SK-N-SH (cell line): ENCODE measurements at regions of chr3 and their contacts with region 1.

Region 1: DNA sequence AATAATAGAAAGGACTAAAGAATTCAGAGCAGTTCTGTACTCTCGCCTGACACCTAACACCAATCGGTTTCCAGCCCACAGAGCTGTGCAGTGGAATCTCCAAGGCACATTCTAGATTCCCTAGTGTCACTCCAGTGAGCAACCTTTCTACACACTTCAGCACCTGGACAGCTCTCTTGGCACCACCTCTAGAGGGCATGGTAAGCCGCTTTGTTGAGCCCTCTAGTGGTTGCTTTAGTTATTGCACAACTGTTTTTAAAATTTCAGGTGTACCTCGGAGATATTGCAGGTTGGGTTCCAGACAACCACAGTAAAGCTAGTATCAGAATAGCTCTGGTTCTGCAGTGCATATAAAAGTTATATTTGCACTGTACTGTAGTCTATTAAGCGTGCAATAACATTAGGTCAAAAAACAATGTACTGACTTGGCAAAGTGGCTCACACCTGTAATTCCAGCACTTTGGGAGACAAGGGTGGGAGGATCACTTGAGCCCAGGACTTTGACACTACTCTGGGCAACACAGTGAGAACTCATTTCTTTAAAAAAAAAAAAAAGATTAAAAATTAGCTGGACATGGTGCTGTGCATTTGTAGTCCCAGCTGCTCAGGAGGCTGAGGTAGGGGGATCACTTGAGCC is 26.5 kb upstream of the ERC2 start:
- DNase-seq: peak; percentile 66
- H3K4me3 ChIP-seq: no peak overlapping the region; a peak in 1 of 4 replicates
- H3K27ac ChIP-seq: no peak overlapping the region
- H3K4me1 ChIP-seq: no peaks in the 10 kb centered on the region
- H3K27me3 ChIP-seq: no peaks in the 10 kb centered on the region
- CTCF ChIP-seq: peak; percentile 97
- EP300 ChIP-seq: no peak
- RAD21 ChIP-seq: peak; percentile 72

Region 2: GRCh38 chr3:56467108-56467507 is 27.7 kb before region 1 on chr3:
- CTCF ChIA-PET with region 1: interaction called, 15 read pairs
- POLR2A ChIA-PET with region 1: no interaction called
- DNase-seq: peak; percentile 89
- H3K4me3 ChIP-seq: peak overlapping the region; percentile 64 to 65
- H3K27ac ChIP-seq: no peak overlapping the region
- H3K4me1 ChIP-seq: no peaks in the 10 kb centered on the region; a peak in 1 of 4 replicates
- H3K27me3 ChIP-seq: no peaks in the 10 kb centered on the region
- CTCF ChIP-seq: no peak
- EP300 ChIP-seq: no peak
- RAD21 ChIP-seq: no peak

Region 3: DNA sequence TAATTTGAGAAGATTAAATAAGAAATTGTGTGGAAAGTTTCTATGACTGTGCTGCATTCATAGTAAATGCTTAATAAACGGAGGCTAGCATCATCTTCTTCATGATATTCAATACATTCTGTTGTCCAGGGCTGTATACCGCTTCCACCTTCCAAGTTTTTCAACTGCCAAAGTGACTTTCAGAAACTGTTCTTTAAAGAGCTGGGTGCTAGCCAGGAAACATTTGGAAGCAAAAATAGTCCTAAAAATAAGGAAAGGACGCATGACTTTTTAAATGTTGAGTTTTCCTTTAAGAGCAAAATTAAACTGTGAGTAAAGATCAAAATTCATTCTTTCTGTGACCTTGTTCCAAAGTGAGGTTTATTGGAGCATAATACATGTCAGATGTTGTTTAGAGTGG is 17.2 kb before region 1 on chr3:
- CTCF ChIA-PET with region 1: interaction called, 42 read pairs
- POLR2A ChIA-PET with region 1: no interaction called
- DNase-seq: no peak
- H3K4me3 ChIP-seq: no peak overlapping the region
- H3K27ac ChIP-seq: no peak overlapping the region
- H3K4me1 ChIP-seq: no peaks in the 10 kb centered on the region
- H3K27me3 ChIP-seq: no peaks in the 10 kb centered on the region; the same call in 1 of the 2 replicates
- CTCF ChIP-seq: no peak
- EP300 ChIP-seq: no peak
- RAD21 ChIP-seq: no peak

Region 4: GRCh38 chr3:56484122-56484521 is 10.7 kb before region 1 on chr3:
- CTCF ChIA-PET with region 1: interaction called, 42 read pairs
- POLR2A ChIA-PET with region 1: no interaction called
- DNase-seq: no peak
- H3K4me3 ChIP-seq: no peak overlapping the region
- H3K27ac ChIP-seq: no peak overlapping the region
- H3K4me1 ChIP-seq: no peaks in the 10 kb centered on the region
- H3K27me3 ChIP-seq: no peaks in the 10 kb centered on the region; the same call in 1 of the 2 replicates
- CTCF ChIP-seq: no peak
- EP300 ChIP-seq: no peak
- RAD21 ChIP-seq: no peak

Region 5: DNA sequence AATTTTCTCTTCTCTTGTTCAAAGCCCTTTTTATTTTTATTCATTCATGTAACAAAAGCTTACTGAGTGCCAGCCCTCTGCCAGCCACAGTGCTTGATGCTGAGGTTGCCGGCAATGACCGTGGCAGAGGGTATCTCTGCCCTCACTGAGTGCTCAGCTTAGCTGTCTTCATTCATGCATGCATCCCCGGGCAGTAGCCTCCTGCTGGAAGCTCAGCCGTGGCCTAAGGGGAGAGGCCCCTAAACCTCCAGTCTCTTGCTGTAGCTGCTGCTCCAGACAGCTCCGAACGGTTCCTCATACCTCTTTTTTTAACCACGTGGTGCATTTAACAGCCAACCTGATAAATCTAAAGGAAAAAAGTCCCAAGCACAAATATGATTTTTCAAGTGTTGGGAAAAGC is 27.6 kb after region 1 on chr3:
- CTCF ChIA-PET with region 1: interaction called, 15 read pairs
- POLR2A ChIA-PET with region 1: no interaction called
- DNase-seq: no peak
- H3K4me3 ChIP-seq: no peak overlapping the region
- H3K27ac ChIP-seq: no peak overlapping the region
- H3K4me1 ChIP-seq: no peaks in the 10 kb centered on the region
- H3K27me3 ChIP-seq: no peaks in the 10 kb centered on the region
- CTCF ChIP-seq: no peak
- EP300 ChIP-seq: no peak
- RAD21 ChIP-seq: no peak

Region 6: DNA sequence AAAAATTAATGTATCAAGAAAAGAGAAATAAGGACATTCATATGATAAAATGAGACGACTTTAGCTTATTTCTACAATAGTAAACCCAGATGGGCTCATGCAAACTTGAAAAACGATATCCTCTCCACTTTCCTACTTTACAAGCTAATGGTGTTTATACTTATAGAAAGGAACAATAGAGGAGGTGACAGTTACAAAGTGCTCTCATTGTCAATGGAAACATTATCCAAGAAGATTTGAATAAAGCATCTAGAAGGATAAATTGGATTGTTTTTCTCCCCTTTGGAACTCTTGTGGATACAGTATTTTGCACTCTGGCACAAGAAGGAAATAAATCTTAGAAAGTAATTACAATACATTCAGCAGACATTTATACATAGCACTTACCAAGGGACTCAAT is 41.9 kb after region 1 on chr3:
- CTCF ChIA-PET with region 1: interaction called, 10 read pairs
- POLR2A ChIA-PET with region 1: no interaction called
- DNase-seq: no peak
- H3K4me3 ChIP-seq: no peak overlapping the region
- H3K27ac ChIP-seq: no peak overlapping the region
- H3K4me1 ChIP-seq: no peaks in the 10 kb centered on the region
- H3K27me3 ChIP-seq: no peaks in the 10 kb centered on the region
- CTCF ChIP-seq: no peak
- EP300 ChIP-seq: no peak
- RAD21 ChIP-seq: no peak

Region 7: GRCh38 chr3:56610669-56611335 is 116.0 kb after region 1 on chr3:
- CTCF ChIA-PET with region 1: no interaction called
- POLR2A ChIA-PET with region 1: no interaction called
- DNase-seq: no peak
- H3K4me3 ChIP-seq: no peak overlapping the region
- H3K27ac ChIP-seq: no peak overlapping the region
- H3K4me1 ChIP-seq: no peaks in the 10 kb centered on the region
- H3K27me3 ChIP-seq: no peaks in the 10 kb centered on the region
- CTCF ChIP-seq: no peak
- EP300 ChIP-seq: no peak
- RAD21 ChIP-seq: no peak

Region 8: DNA sequence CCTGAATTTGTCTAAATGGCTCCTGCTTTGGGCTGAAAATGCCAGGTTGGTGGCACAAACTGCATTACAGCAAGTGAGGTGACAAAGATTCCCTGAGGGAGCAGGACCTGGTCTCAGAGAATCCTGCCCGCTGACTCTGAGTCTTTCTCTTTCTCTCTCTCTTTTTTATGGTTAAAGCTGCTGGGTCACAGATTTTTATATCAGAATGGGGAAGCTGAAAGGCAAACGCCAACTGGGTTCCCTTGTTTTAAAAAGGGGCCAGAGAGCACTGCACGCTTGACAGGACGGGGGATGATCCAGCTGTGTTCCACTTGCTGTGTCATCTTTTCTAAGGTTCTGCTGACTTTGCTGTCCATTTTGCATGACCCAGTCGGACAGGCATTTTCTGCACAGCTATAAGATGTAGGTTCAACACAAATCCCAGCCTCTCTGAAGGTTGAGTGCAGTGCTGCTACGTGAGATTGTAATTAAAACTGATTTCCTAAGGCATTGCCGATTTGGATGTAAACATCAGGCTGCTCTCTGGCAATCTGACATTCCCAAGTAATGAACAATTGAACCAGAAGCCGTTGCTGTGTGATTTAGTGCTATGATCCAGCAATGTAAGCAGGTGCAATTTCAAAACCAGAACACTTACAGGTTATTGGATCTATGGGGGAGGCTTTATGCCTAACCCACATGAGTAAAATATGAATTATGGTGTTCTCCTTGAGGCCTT is 281.2 kb after region 1 on chr3:
- CTCF ChIA-PET with region 1: no interaction called
- POLR2A ChIA-PET with region 1: no interaction called
- DNase-seq: no peak
- H3K4me3 ChIP-seq: no peak overlapping the region
- H3K27ac ChIP-seq: peak overlapping the region in 1 of 2 experiments; percentile 51; a peak in 2 of 4 replicates
- H3K4me1 ChIP-seq: peaks cover 0 to 27% of the 10 kb centered on the region in 2 experiments; a peak in 2 of 4 replicates
- H3K27me3 ChIP-seq: no peaks in the 10 kb centered on the region
- CTCF ChIP-seq: no peak
- EP300 ChIP-seq: no peak
- RAD21 ChIP-seq: no peak

Region 9: GRCh38 chr3:57597122-57597923 is 1102.5 kb after region 1 on chr3 and contains the start of gene ARF4:
- CTCF ChIA-PET with region 1: no interaction called
- POLR2A ChIA-PET with region 1: no interaction called
- DNase-seq: peak; percentile 97
- H3K4me3 ChIP-seq: peak within 1 kb of the TSS; percentile 91
- H3K27ac ChIP-seq: peak within 1 kb of the TSS; percentile 96 to 100
- H3K4me1 ChIP-seq: peaks cover 3 to 13% of the 10 kb centered on the region in 2 experiments; a peak in 3 of 4 replicates
- H3K27me3 ChIP-seq: no peaks in the 10 kb centered on the region
- CTCF ChIP-seq: no peak; the same call in 1 of the 2 replicates
- EP300 ChIP-seq: no peak; a peak in 1 of 4 replicates
- RAD21 ChIP-seq: no peak
- polyA plus RNA-seq, gene ARF4: 150 and 208 TPM in 2 replicates